ENCODE measurements at regions of chr7 and their contacts with region 1.

Region 1: GRCh38 chr7:90173127-90173844 is 19.0 kb downstream of the STEAP1 start:
- DNase-seq: no peak
- CTCF ChIP-seq: no peak

Region 2: GRCh38 chr7:90262438-90262837 is 89.2 kb after region 1 on chr7:
- in situ Hi-C with region 1: loop called (anchors 25 kb)
- DNase-seq: peak; percentile 40
- CTCF ChIP-seq: peak; percentile 46

Region 3: GRCh38 chr7:90424720-90425119 is 251.4 kb after region 1 on chr7:
- in situ Hi-C with region 1: loop called (anchors 25 kb)
- DNase-seq: peak; percentile 56
- CTCF ChIP-seq: no peak

Measured in GM13977 (cell line).